ENCODE measurements at regions of chr4 and their contacts with region 1.

Region 1: GRCh38 chr4:176340871-176341685 is 21.3 kb downstream of the SPCS3 start:
- DNase-seq: no peak
- ATAC-seq: peak in 7 of 8 donors; percentile 35 to 79 (median 58)
- H3K4me3 ChIP-seq: peak overlapping the region in 6 of 10 donors; percentile 18 to 47 (median 25)
- H3K27ac ChIP-seq: no peak overlapping the region
- H3K4me1 ChIP-seq: peaks cover 0 to 29% (median 8%) of the 10 kb centered on the region in 9 donors
- H3K27me3 ChIP-seq: no peaks in the 10 kb centered on the region
- CTCF ChIP-seq: peak; percentile 35 to 84 (median 65)

Region 2: GRCh38 chr4:175947117-175947722 is 393.9 kb before region 1 on chr4:
- intact Hi-C with region 1: loop called in 9 of 10 experiments (anchors 5 to 10 kb)
- DNase-seq: no peak
- ATAC-seq: no peak
- H3K4me3 ChIP-seq: peak overlapping the region in 5 of 10 donors; percentile 3 to 42 (median 29)
- H3K27ac ChIP-seq: peak overlapping the region in 2 of 10 donors; percentile 8 to 64
- H3K4me1 ChIP-seq: peaks cover 0 to 8% (median 3%) of the 10 kb centered on the region in 9 donors
- H3K27me3 ChIP-seq: no peaks in the 10 kb centered on the region
- CTCF ChIP-seq: peak; percentile 47 to 79 (median 73)

Region 3: GRCh38 chr4:175953960-175954521 is 387.0 kb before region 1 on chr4:
- intact Hi-C with region 1: loop called in 9 of 10 experiments (anchors 5 to 10 kb)
- DNase-seq: no peak
- ATAC-seq: no peak
- H3K4me3 ChIP-seq: no peak overlapping the region
- H3K27ac ChIP-seq: no peak overlapping the region
- H3K4me1 ChIP-seq: no peaks in the 10 kb centered on the region
- H3K27me3 ChIP-seq: no peaks in the 10 kb centered on the region
- CTCF ChIP-seq: peak in 1 of 9 donors; percentile 2

Region 4: GRCh38 chr4:176034499-176034898 is 306.6 kb before region 1 on chr4:
- intact Hi-C with region 1: loop called in 7 of 10 experiments (anchors 5 to 10 kb)
- DNase-seq: peak in 1 of 2 donors; percentile 29
- ATAC-seq: no peak
- H3K4me3 ChIP-seq: no peak overlapping the region
- H3K27ac ChIP-seq: no peak overlapping the region
- H3K4me1 ChIP-seq: no peaks in the 10 kb centered on the region
- H3K27me3 ChIP-seq: no peaks in the 10 kb centered on the region
- CTCF ChIP-seq: peak in 8 of 9 donors; percentile 12 to 61 (median 47)

Region 5: GRCh38 chr4:176044589-176044951 is 296.5 kb before region 1 on chr4:
- intact Hi-C with region 1: loop called in 7 of 10 experiments (anchors 5 to 10 kb)
- DNase-seq: no peak
- ATAC-seq: no peak
- H3K4me3 ChIP-seq: no peak overlapping the region
- H3K27ac ChIP-seq: no peak overlapping the region
- H3K4me1 ChIP-seq: no peaks in the 10 kb centered on the region
- H3K27me3 ChIP-seq: peaks cover 0 to 3% (median 0%) of the 10 kb centered on the region in 7 donors
- CTCF ChIP-seq: no peak

Region 6: DNA sequence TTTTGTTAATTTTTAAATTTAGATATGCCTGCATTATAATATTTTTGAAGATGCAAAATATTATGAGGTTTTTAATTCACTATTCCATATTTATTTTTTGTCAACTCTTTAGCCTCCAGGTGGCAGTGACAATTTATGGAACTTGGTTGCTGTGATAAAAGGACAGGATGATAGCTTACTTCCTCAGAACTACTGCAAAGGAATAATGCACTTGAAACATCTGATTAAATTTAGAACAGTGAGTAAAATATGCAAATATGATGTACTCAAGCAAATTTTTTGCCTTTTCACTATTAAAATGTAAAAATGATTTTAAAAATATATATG is 190.8 kb before region 1 on chr4:
- intact Hi-C with region 1: loop called (anchors 1 to 10 kb)
- DNase-seq: no peak
- ATAC-seq: peak in 2 of 8 donors; percentile 61 to 64
- H3K4me3 ChIP-seq: no peak overlapping the region
- H3K27ac ChIP-seq: no peak overlapping the region
- H3K4me1 ChIP-seq: no peaks in the 10 kb centered on the region
- H3K27me3 ChIP-seq: no peaks in the 10 kb centered on the region
- CTCF ChIP-seq: peak; percentile 13 to 68 (median 44)

Region 7: DNA sequence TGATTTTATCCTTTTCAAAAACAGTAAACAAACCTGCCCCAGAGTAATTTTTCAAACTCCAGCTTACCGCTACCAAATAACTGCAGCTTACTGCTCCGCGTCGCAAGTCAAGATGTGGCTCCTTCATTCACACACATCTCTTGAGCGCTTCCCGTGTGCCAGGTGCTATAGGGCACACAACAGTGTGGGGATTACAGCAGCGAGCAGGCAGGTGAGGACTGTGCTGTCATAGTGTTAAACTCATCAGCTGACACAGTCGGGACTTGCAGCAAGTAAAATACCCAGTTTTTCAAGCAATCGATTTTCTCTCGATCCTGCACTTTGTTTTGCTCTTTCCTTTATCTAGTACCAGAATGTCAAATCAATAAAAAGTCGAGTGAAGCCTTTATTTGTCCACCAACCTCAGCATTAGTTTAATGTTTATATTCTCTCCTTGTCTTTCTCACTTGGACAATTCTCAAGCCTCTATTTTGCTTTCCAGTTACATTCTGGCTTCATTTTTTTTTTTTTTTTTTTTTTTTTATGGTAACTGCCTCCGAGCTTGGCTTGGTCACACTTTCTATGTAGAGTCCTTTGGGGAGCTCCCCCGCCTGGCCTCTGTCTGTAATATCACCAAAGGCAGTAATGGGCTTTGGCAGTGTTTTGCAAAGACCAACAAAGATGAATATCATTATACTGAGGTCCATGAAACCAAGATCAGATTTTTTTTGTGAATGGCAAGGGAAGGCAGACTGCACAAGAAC is 63.7 kb before region 1 on chr4:
- intact Hi-C with region 1: loop called in 1 of 10 experiments (anchors 5 kb)
- DNase-seq: peak; percentile 44 to 51
- ATAC-seq: peak in 7 of 8 donors; percentile 73 to 90 (median 81)
- H3K4me3 ChIP-seq: peak overlapping the region in 2 of 10 donors; percentile 21 to 30
- H3K27ac ChIP-seq: no peak overlapping the region
- H3K4me1 ChIP-seq: peaks cover 0 to 6% (median 0%) of the 10 kb centered on the region in 9 donors
- H3K27me3 ChIP-seq: no peaks in the 10 kb centered on the region
- CTCF ChIP-seq: peak; percentile 13 to 72 (median 54)

Region 8: DNA sequence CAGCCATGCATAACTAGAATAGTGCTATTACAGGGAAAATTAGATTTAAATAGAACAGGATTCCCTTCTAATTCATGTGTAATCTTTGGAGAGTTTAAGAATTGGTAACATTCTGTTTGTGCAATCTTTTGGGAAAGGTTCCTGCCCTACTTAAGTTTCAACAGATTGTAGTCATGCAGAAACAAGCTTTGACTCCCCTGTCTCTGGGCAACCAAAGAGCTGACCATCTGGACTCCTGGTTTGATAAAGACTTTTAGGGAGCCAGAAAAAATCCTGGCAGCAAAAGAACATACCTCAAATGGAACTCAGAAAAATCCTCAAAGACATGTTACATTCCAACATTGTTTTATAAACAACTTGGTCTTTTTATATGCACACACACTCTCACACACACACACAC is 777.5 kb after region 1 on chr4:
- intact Hi-C with region 1: no loop called
- DNase-seq: peak in 1 of 2 donors; percentile 7
- ATAC-seq: peak in 7 of 8 donors; percentile 31 to 93 (median 82)
- H3K4me3 ChIP-seq: no peak overlapping the region
- H3K27ac ChIP-seq: no peak overlapping the region
- H3K4me1 ChIP-seq: no peaks in the 10 kb centered on the region
- H3K27me3 ChIP-seq: no peaks in the 10 kb centered on the region
- CTCF ChIP-seq: no peak

Measured in heart right ventricle (tissue), 16 donors.